CD8-positive, alpha-beta T cell (primary cell): ENCODE measurements at regions of chr1 and their contacts with region 1.

Region 1: GRCh38 chr1:1013105-1013921 is at the start of gene ISG15:
- DNase-seq: peak; percentile 79 to 96 (median 90)
- ATAC-seq: peak; percentile 94
- H3K4me3 ChIP-seq: peak within 1 kb of the TSS; percentile 75 to 78
- H3K4me3 Mint-ChIP-seq: peak within 1 kb of the TSS; percentile 98
- H3K27ac ChIP-seq: peak within 1 kb of the TSS; percentile 79 to 87
- H3K27ac Mint-ChIP-seq: peak within 1 kb of the TSS; percentile 99
- H3K4me1 ChIP-seq: peaks cover 23% of the 10 kb centered on the region
- H3K4me1 Mint-ChIP-seq: peaks cover 40% of the 10 kb centered on the region
- H3K27me3 ChIP-seq: no peaks in the 10 kb centered on the region
- H3K27me3 Mint-ChIP-seq: peaks cover 4% of the 10 kb centered on the region
- CTCF ChIP-seq: no peak
- total RNA-seq, gene ISG15: 56.4 to 58.4 TPM

Region 2: DNA sequence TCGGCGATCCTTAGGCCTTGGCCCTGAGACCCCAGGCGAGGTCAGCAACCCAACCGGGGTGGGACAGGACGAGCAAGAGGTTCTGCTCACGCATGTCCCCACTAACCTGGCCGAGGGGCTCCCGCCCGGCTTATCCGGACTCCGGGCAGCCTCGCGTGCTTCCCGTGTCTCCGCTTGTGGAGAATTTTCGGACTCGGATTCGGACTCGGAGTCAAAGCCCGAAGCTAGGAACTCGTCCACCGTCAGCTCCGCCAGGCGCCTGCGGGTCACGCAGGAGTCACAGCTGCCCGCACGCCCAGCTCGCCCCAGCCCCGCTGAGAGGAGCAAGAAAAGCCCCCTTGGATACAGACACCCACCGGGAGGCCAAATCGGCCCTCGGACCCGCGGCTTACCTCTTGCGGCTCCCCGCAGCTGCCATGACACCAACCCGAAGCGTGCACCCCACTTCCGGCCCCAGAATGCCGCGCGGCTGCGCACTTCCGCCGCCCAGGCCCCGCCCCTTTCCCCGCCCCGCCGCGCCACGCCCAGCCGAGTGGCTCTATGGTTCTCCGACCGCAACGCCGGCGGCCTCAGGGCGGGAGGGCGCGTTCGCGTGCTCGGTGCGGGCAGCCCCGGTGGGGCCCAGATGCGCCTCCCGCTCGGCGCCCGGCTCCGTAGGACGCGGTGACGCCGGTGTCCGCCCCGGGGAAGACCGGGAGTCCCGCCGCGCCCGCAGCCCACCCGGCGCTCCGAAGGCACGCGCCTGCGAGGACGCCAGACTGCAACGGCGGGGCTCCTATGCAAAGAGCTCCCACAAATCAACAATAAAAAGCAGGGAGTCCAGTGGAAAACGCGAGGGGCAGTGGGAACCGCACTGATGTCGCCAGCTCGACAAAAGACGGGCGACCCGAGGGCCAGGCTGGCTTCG is 54.2 kb before region 1 on chr1 and contains the start of gene NOC2L:
- CTCF ChIA-PET with region 1: no interaction called
- POLR2A ChIA-PET with region 1: interaction called, 4 read pairs
- intact Hi-C with region 1: loop called in 1 of 2 experiments (anchors 1 kb)
- DNase-seq: peak; percentile 91 to 99 (median 96)
- ATAC-seq: peak; percentile 83
- H3K4me3 ChIP-seq: peak within 1 kb of the TSS; percentile 99 to 100
- H3K4me3 Mint-ChIP-seq: peak within 1 kb of the TSS; percentile 86
- H3K27ac ChIP-seq: peak within 1 kb of the TSS; percentile 75 to 80
- H3K27ac Mint-ChIP-seq: peak within 1 kb of the TSS; percentile 77
- H3K4me1 ChIP-seq: peaks cover 29% of the 10 kb centered on the region
- H3K4me1 Mint-ChIP-seq: peaks cover 8% of the 10 kb centered on the region
- H3K27me3 ChIP-seq: no peaks in the 10 kb centered on the region
- H3K27me3 Mint-ChIP-seq: no peaks in the 10 kb centered on the region
- CTCF ChIP-seq: no peak
- total RNA-seq, gene NOC2L: 54.0 to 54.7 TPM

Region 3: DNA sequence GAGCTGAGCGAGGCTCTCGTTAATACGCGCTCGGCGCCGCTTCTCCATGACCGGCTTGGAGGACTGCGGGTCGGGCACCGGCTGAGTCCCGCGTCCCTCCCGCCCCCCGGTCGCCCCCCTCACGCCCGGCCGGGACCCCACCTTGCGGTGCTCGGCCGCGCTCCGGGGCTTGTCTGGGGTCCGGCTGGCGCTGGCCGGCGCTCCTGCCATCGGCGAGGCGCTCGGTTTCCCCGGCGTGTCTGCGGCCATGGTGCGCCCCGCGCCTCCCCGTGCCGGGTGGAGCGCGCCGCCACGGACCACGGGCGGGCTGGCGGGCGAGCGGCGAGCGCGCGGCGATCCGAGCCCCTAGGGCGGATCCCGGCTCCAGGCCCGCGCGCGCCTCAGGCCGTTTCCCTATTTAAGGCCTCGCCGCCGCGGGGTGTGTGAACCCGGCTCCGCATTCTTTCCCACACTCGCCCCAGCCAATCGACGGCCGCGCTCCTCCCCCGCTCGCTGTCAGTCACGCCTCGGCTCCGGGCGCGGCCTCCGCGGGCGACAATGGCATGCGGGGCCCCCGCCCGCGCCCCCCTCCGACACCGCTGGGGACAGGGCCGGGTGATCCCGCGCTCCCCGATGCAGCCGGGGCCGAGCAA is 13.5 kb before region 1 on chr1 and contains the start of gene HES4:
- CTCF ChIA-PET with region 1: interaction called, 26 read pairs
- POLR2A ChIA-PET with region 1: interaction called, 3 read pairs
- intact Hi-C with region 1: loop called (anchors 1 kb)
- DNase-seq: peak in 5 of 9 experiments; percentile 50 to 83 (median 70)
- ATAC-seq: peak; percentile 44
- H3K4me3 ChIP-seq: peak within 1 kb of the TSS; percentile 39 to 50
- H3K4me3 Mint-ChIP-seq: peak within 1 kb of the TSS; percentile 82
- H3K27ac ChIP-seq: peak within 1 kb of the TSS in 1 of 2 experiments; percentile 19
- H3K27ac Mint-ChIP-seq: peak within 1 kb of the TSS; percentile 94
- H3K4me1 ChIP-seq: peaks cover 57% of the 10 kb centered on the region
- H3K4me1 Mint-ChIP-seq: peaks cover 24% of the 10 kb centered on the region
- H3K27me3 ChIP-seq: peaks cover 40 to 62% of the 10 kb centered on the region in 2 experiments
- H3K27me3 Mint-ChIP-seq: peaks cover 30% of the 10 kb centered on the region
- CTCF ChIP-seq: no peak
- total RNA-seq, gene HES4: 26.0 to 30.9 TPM

Region 4: DNA sequence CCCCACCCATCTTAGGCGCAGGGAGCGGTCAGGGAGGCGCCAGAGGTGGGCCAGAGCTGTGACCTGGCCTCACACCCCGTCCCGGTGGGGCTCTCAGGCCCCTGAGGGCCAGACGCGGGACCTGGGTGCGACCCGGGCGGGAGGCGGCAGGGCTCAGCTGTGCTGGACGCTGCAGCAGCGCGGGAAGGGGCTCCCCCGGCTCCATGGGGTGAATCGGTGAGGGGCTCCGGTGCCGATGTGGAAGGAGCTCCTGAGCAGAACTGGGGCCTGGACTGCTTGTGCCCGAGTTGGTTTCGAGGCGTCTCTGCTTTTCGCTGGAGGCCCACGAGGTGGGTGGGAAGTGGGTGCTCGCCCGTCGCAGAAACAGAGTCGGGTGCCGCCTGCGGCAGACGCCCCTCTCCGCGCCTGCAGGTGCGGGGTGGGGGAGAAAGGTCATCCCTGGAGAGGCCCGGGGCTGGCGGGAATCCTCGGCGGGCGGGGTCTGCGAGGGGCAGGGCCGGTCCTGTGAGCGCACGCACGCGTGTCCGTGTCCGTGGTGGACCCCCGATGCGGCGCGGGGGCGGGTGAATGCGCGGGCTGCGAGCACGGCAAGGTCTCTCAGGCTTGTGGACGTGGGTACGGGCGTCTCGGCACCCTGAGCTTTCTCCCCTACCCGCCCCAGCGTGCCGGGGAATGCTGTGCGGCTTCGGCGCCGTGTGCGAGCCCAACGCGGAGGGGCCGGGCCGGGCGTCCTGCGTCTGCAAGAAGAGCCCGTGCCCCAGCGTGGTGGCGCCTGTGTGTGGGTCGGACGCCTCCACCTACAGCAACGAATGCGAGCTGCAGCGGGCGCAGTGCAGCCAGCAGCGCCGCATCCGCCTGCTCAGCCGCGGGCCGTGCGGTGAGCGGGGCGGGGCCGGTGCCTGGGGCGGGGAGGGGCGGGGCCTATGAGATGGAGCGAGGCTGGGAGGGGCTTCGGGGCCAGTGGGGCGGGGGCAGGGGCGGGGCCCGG is 27.0 kb after region 1 on chr1:
- CTCF ChIA-PET with region 1: interaction called, 3 read pairs
- POLR2A ChIA-PET with region 1: interaction called, 10 read pairs
- intact Hi-C with region 1: no loop called
- DNase-seq: peak; percentile 67 to 94 (median 81)
- ATAC-seq: peak; percentile 94
- H3K4me3 ChIP-seq: peak overlapping the region; percentile 33 to 57
- H3K4me3 Mint-ChIP-seq: peak overlapping the region; percentile 72
- H3K27ac ChIP-seq: no peak overlapping the region
- H3K27ac Mint-ChIP-seq: no peak overlapping the region
- H3K4me1 ChIP-seq: peaks cover 21% of the 10 kb centered on the region
- H3K4me1 Mint-ChIP-seq: peaks cover 14% of the 10 kb centered on the region
- H3K27me3 ChIP-seq: peaks cover 0 to 6% of the 10 kb centered on the region in 2 experiments
- H3K27me3 Mint-ChIP-seq: peaks cover 19% of the 10 kb centered on the region
- CTCF ChIP-seq: no peak

Region 5: GRCh38 chr1:1069061-1069708 is 55.9 kb after region 1 on chr1:
- CTCF ChIA-PET with region 1: interaction called, 24 read pairs
- POLR2A ChIA-PET with region 1: interaction called, 3 read pairs
- intact Hi-C with region 1: loop called (anchors 1 to 2 kb)
- DNase-seq: peak; percentile 86 to 97 (median 89)
- ATAC-seq: peak; percentile 58
- H3K4me3 ChIP-seq: peak overlapping the region; percentile 65 to 88
- H3K4me3 Mint-ChIP-seq: peak overlapping the region; percentile 81
- H3K27ac ChIP-seq: peak overlapping the region; percentile 53 to 55
- H3K27ac Mint-ChIP-seq: peak overlapping the region; percentile 80
- H3K4me1 ChIP-seq: peaks cover 20% of the 10 kb centered on the region
- H3K4me1 Mint-ChIP-seq: peaks cover 7% of the 10 kb centered on the region
- H3K27me3 ChIP-seq: peaks cover 0 to 8% of the 10 kb centered on the region in 2 experiments
- H3K27me3 Mint-ChIP-seq: no peaks in the 10 kb centered on the region
- CTCF ChIP-seq: no peak

Region 6: DNA sequence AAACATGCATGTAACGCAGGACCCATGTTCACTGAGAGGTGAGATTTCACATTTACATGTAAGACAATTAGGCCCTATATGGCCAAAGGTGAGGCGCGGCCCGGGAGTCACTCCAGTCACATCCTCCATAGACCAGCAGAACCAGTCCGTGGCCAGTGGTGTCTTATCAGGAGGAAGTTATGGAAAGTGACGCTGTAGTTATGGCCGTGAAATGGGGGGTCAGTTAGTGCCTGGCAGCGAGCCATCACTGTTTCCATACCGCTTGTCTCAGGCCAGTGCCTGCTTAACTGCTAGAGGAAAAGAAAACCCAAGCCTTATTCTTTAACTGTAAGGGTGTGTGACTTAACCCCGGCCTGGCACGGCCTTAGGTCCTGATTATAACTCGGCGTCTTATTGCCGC is 96.4 kb after region 1 on chr1:
- CTCF ChIA-PET with region 1: no interaction called
- POLR2A ChIA-PET with region 1: no interaction called
- intact Hi-C with region 1: no loop called
- DNase-seq: no peak
- ATAC-seq: no peak
- H3K4me3 ChIP-seq: no peak overlapping the region
- H3K4me3 Mint-ChIP-seq: no peak overlapping the region
- H3K27ac ChIP-seq: no peak overlapping the region
- H3K27ac Mint-ChIP-seq: no peak overlapping the region
- H3K4me1 ChIP-seq: peaks cover 6% of the 10 kb centered on the region
- H3K4me1 Mint-ChIP-seq: peaks cover 19% of the 10 kb centered on the region
- H3K27me3 ChIP-seq: no peaks in the 10 kb centered on the region
- H3K27me3 Mint-ChIP-seq: no peaks in the 10 kb centered on the region
- CTCF ChIP-seq: no peak